Panc1 (cell line): ENCODE measurements at regions of chr9 and their contacts with region 1.

Region 1: GRCh38 chr9:74773886-74774479 is 113.7 kb downstream of the TRPM6 start:
- DNase-seq: peak; percentile 39
- ATAC-seq: peak; percentile 72; the same call in 1 of the 2 replicates
- H3K4me3 ChIP-seq: no peak overlapping the region
- H3K27ac ChIP-seq: no peak overlapping the region
- H3K4me1 ChIP-seq: no peaks in the 10 kb centered on the region
- H3K27me3 ChIP-seq: no peaks in the 10 kb centered on the region
- CTCF ChIP-seq: peak; percentile 86

Region 2: DNA sequence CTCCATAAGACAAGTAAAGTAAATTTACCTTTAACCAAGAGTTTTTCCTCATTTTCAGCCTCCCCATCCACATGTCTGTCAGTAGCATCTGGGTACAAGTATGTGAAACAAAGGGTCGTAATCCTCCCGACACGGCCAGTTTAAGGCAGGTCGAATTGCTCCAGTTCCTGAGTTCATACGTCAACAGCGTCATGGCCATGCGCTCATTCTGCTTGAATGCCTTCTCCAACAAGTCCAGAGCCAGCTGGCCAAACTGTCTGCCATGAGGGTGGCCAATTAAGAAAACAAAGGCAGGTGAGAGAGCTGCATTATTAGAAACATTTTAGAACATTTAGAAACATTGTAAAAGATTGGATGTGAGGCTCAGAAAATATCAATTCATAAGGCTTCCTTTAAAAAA is 26.2 kb after region 1 on chr9:
- CTCF ChIA-PET with region 1: no interaction called
- POLR2A ChIA-PET with region 1: no interaction called
- in situ Hi-C with region 1: no loop called
- intact Hi-C with region 1: no loop called
- DNase-seq: no peak
- ATAC-seq: no peak
- H3K4me3 ChIP-seq: no peak overlapping the region
- H3K27ac ChIP-seq: no peak overlapping the region
- H3K4me1 ChIP-seq: no peaks in the 10 kb centered on the region; the same call in 1 of the 2 replicates
- H3K27me3 ChIP-seq: no peaks in the 10 kb centered on the region
- CTCF ChIP-seq: no peak

Region 3: GRCh38 chr9:74952281-74953151 is 178.5 kb after region 1 on chr9 and contains the start of gene C9orf40:
- CTCF ChIA-PET with region 1: interaction called, 6 read pairs
- POLR2A ChIA-PET with region 1: no interaction called
- in situ Hi-C with region 1: no loop called
- intact Hi-C with region 1: loop called (anchors 10 kb)
- DNase-seq: peak; percentile 43
- ATAC-seq: peak; percentile 94
- H3K4me3 ChIP-seq: peak within 1 kb of the TSS; percentile 87
- H3K27ac ChIP-seq: peak within 1 kb of the TSS; percentile 87
- H3K4me1 ChIP-seq: no peaks in the 10 kb centered on the region; the same call in 1 of the 2 replicates
- H3K27me3 ChIP-seq: no peaks in the 10 kb centered on the region
- CTCF ChIP-seq: peak; percentile 87
- total RNA-seq, gene C9orf40: 9.2 TPM

Region 4: DNA sequence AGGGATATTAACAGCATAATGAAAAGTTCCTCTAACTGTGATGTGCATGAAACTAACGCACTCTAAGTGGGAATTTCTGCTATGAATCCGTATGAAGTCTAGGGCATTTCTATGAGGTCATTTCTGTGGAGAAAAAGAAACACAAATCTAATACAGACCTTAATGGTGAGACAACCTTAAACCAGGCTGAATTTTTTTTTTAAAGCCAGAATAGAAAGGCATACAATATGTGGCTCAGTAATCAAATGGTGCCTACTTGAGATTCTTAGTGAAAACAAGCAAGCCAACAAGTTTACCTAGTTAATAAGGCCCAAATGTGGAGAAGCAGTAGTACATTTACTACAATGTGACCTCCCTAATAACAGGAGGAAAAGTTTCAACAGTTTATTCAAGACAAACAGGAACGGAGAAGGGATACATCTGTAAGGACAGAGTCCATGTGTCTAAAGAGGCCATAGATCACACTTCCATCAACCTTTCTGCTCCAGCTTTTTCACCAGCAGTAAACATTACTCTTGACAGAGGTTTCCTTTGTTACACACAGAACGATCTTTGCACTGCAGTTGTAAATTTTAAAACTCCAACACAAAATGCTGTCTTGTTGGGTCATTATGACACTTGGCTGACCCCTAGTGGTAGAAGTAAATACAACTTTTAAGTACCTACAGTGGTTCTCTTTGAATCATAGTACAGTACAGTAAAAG is 227.9 kb after region 1 on chr9:
- CTCF ChIA-PET with region 1: no interaction called
- POLR2A ChIA-PET with region 1: no interaction called
- in situ Hi-C with region 1: no loop called
- intact Hi-C with region 1: loop called (anchors 1 kb)
- DNase-seq: peak; percentile 33
- ATAC-seq: peak; percentile 84
- H3K4me3 ChIP-seq: no peak overlapping the region
- H3K27ac ChIP-seq: no peak overlapping the region
- H3K4me1 ChIP-seq: no peaks in the 10 kb centered on the region
- H3K27me3 ChIP-seq: no peaks in the 10 kb centered on the region
- CTCF ChIP-seq: peak; percentile 63; the same call in 1 of the 2 replicates

Region 5: GRCh38 chr9:75072895-75073294 is 298.9 kb after region 1 on chr9:
- CTCF ChIA-PET with region 1: no interaction called
- POLR2A ChIA-PET with region 1: no interaction called
- in situ Hi-C with region 1: no loop called
- intact Hi-C with region 1: loop called (anchors 1 kb)
- DNase-seq: no peak
- ATAC-seq: no peak
- H3K4me3 ChIP-seq: no peak overlapping the region
- H3K27ac ChIP-seq: no peak overlapping the region
- H3K4me1 ChIP-seq: no peaks in the 10 kb centered on the region
- H3K27me3 ChIP-seq: no peaks in the 10 kb centered on the region
- CTCF ChIP-seq: no peak